ENCODE measurements at regions of chr5 and their contacts with region 1.

Region 1: GRCh38 chr5:76641514-76642120 is 18.4 kb upstream of the F2RL2 start:
- DNase-seq: peak; percentile 85
- H3K4me3 ChIP-seq: no peak overlapping the region
- H3K27ac ChIP-seq: peak overlapping the region; percentile 84
- H3K4me1 ChIP-seq: peaks cover 34% of the 10 kb centered on the region
- H3K27me3 ChIP-seq: no peaks in the 10 kb centered on the region
- CTCF ChIP-seq: peak; percentile 66 to 72
- POLR2A ChIP-seq: no peak

Region 2: GRCh38 chr5:76402886-76403765 is 238.5 kb before region 1 on chr5 and contains the start of gene IQGAP2:
- CTCF ChIA-PET with region 1: no interaction called
- POLR2A ChIA-PET with region 1: no interaction called
- dilution Hi-C with region 1: no loop called
- intact Hi-C with region 1: loop called (anchors 5 kb)
- DNase-seq: peak; percentile 51
- H3K4me3 ChIP-seq: peak within 1 kb of the TSS; percentile 42 to 70 (median 50)
- H3K27ac ChIP-seq: no peak within 1 kb of the TSS
- H3K4me1 ChIP-seq: peaks cover 7% of the 10 kb centered on the region
- H3K27me3 ChIP-seq: peaks cover 34 to 54% of the 10 kb centered on the region in 2 experiments
- CTCF ChIP-seq: peak; percentile 66 to 82
- POLR2A ChIP-seq: no peak
- total RNA-seq, gene IQGAP2: 4.7 and 5.7 TPM in 2 replicates

Region 3: DNA sequence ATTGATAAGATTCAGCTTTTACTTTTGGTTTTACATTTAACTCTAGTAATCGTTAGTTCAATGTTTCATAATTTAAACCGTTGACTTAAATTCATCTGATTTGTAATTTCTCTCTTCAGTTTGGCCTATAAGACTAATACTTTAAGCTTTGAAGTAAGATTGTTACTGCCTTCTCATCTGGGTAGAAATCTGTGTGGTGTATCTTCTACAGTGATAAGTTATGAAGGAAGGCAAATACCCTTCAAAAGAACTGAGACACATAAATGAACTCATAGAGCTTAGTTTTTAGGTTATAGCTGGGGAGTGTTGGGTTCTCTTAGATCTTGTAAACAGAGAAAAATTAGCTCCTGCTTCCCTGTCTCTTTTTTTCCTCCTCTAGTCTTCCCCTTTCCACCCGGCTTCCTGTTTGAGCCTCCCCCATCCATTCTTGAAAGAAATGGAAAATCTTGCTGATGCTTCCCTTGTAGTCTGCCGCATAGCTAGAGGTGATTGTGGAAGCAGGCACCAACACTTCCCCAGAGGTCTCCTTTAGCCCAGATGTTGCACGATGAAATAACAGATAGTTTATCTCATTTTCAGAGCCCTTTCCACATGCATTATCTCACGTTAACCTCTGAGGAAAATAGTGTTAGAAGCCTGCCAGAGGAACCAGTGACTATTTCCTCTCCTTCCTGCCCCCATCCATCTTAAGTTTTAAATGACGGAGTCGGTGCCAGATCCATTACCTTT is 16.4 kb before region 1 on chr5:
- CTCF ChIA-PET with region 1: interaction called, 4 read pairs
- POLR2A ChIA-PET with region 1: no interaction called
- dilution Hi-C with region 1: no loop called
- intact Hi-C with region 1: loop called (anchors 1 kb)
- DNase-seq: peak; percentile 80
- H3K4me3 ChIP-seq: no peak overlapping the region
- H3K27ac ChIP-seq: peak overlapping the region; percentile 59
- H3K4me1 ChIP-seq: peaks cover 17% of the 10 kb centered on the region
- H3K27me3 ChIP-seq: no peaks in the 10 kb centered on the region
- CTCF ChIP-seq: no peak
- POLR2A ChIP-seq: no peak

Region 4: GRCh38 chr5:76660360-76660759 is 18.7 kb after region 1 on chr5:
- CTCF ChIA-PET with region 1: interaction called, 3 read pairs
- POLR2A ChIA-PET with region 1: no interaction called
- dilution Hi-C with region 1: no loop called
- intact Hi-C with region 1: loop called (anchors 1 kb)
- DNase-seq: peak; percentile 65
- H3K4me3 ChIP-seq: peak overlapping the region in 1 of 3 experiments; percentile 5
- H3K27ac ChIP-seq: peak overlapping the region; percentile 6
- H3K4me1 ChIP-seq: peaks cover 44% of the 10 kb centered on the region
- H3K27me3 ChIP-seq: no peaks in the 10 kb centered on the region
- CTCF ChIP-seq: no peak
- POLR2A ChIP-seq: no peak

Region 5: DNA sequence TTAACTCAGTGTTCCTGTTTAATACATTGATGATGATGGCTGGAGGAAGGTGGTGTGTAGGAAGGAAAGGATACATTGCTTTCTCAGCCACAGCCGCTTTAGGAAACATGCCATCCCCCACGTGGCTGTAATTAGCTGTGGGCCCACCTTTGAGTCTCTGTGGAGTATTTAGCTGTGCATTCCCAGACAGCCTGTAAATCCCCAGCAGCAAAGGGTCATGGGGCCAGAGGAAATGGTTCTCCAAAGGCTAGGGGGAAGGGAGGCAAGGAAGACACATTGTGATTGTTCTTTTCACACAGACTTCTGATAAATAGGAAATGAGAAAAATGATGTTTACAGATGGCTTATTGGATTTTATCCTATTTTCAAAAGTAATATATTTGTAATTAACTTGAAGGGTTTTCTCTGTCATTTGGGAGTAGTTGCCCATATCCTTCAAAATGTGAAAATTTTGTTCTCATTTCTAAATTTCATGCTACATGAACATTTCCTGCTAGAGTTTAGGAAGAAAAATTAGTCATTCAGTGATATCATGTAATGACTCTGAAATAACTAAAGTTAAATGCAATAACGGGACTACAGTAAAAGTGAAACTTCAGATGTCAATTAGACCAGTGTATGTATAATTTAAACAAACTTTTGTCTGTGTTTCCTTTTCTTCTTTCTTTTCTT is 50.0 kb after region 1 on chr5:
- CTCF ChIA-PET with region 1: interaction called, 31 read pairs
- POLR2A ChIA-PET with region 1: interaction called, 3 read pairs
- dilution Hi-C with region 1: no loop called
- intact Hi-C with region 1: loop called (anchors 1 kb)
- DNase-seq: peak; percentile 98
- H3K4me3 ChIP-seq: no peak overlapping the region
- H3K27ac ChIP-seq: peak overlapping the region; percentile 91
- H3K4me1 ChIP-seq: peaks cover 79% of the 10 kb centered on the region
- H3K27me3 ChIP-seq: no peaks in the 10 kb centered on the region
- CTCF ChIP-seq: no peak
- POLR2A ChIP-seq: peak; percentile 43

Region 6: GRCh38 chr5:76736679-76737556 is 95.3 kb after region 1 on chr5:
- CTCF ChIA-PET with region 1: interaction called, 5 read pairs
- POLR2A ChIA-PET with region 1: no interaction called
- dilution Hi-C with region 1: no loop called
- intact Hi-C with region 1: loop called (anchors 1 kb)
- DNase-seq: peak; percentile 40
- H3K4me3 ChIP-seq: no peak overlapping the region
- H3K27ac ChIP-seq: peak overlapping the region; percentile 40
- H3K4me1 ChIP-seq: peaks cover 23% of the 10 kb centered on the region
- H3K27me3 ChIP-seq: no peaks in the 10 kb centered on the region
- CTCF ChIP-seq: no peak
- POLR2A ChIP-seq: peak; percentile 52